ENCODE measurements at regions of chr9 and their contacts with region 1.

Region 1: DNA sequence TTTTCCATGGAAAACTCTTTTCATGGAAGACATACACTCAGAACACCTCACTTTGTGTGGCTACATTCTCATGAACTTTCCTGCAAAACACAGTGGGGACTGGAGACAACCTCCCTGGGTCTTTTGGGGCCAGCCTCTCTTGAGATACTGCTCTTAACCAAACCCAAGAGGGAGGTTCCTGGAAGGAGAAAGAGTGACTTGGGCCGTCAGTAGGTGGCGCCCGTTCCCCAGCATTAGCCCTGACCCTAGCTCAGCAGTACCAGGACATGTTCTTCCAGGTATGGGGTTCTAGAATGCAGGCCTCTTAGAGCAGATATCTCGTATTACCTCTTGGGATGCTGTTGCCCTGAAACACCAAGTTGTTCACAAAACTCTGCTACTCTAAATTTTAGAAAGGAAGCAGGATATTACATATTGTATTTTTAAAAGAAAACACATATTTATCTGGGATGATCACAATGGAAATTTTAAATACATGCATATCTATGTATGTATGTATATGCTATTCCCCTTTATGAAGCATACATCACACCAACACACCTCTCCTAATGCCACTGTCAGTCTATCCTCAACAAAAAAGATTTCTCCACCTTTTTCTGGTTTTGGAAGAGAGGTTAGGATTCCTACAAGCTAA is 15.8 kb upstream of the GLIS3 start:
- DNase-seq: peak; percentile 60 to 84 (median 73)
- ATAC-seq: peak; percentile 74 to 93 (median 88)
- H3K4me3 ChIP-seq: no peak overlapping the region
- H3K27ac ChIP-seq: no peak overlapping the region
- H3K4me1 ChIP-seq: peaks cover 0 to 11% (median 0%) of the 10 kb centered on the region in 12 donors
- H3K27me3 ChIP-seq: no peaks in the 10 kb centered on the region
- CTCF ChIP-seq: peak; percentile 78 to 92 (median 82)
- POLR2A ChIP-seq: no peak

Region 2: DNA sequence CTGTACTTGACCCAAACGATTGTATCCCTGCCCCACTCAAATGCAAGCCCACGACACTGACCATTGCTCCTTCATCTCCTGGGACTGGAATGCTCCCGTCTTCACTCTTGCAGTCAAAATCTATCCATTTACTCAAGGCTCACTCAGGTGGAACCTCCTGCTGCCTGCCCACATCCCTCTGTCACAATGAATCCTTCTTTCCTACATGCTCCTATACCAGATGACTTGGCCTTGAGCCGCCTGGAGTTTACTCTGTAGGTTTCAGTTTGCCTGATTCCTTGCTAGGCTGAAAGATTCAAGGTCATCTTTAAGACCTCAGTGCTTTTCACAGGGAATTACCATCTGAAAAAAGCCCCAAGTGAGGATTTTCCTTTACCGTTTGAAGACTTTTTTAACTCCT is 279.9 kb before region 1 on chr9:
- intact Hi-C with region 1: no loop called
- DNase-seq: no peak
- ATAC-seq: no peak
- H3K4me3 ChIP-seq: no peak overlapping the region
- H3K27ac ChIP-seq: no peak overlapping the region
- H3K4me1 ChIP-seq: peaks cover 0 to 3% (median 0%) of the 10 kb centered on the region in 12 donors
- H3K27me3 ChIP-seq: no peaks in the 10 kb centered on the region
- CTCF ChIP-seq: no peak
- POLR2A ChIP-seq: no peak

Region 3: GRCh38 chr9:4339357-4339756 is 23.7 kb after region 1 on chr9:
- intact Hi-C with region 1: loop called in 3 of 10 experiments (anchors 1 to 2 kb)
- DNase-seq: peak; percentile 68 to 87 (median 78)
- ATAC-seq: peak in 3 of 4 donors; percentile 55 to 71 (median 58)
- H3K4me3 ChIP-seq: no peak overlapping the region
- H3K27ac ChIP-seq: no peak overlapping the region
- H3K4me1 ChIP-seq: peaks cover 0 to 8% (median 3%) of the 10 kb centered on the region in 12 donors
- H3K27me3 ChIP-seq: no peaks in the 10 kb centered on the region
- CTCF ChIP-seq: peak; percentile 87 to 98 (median 92)
- POLR2A ChIP-seq: no peak

Region 4: DNA sequence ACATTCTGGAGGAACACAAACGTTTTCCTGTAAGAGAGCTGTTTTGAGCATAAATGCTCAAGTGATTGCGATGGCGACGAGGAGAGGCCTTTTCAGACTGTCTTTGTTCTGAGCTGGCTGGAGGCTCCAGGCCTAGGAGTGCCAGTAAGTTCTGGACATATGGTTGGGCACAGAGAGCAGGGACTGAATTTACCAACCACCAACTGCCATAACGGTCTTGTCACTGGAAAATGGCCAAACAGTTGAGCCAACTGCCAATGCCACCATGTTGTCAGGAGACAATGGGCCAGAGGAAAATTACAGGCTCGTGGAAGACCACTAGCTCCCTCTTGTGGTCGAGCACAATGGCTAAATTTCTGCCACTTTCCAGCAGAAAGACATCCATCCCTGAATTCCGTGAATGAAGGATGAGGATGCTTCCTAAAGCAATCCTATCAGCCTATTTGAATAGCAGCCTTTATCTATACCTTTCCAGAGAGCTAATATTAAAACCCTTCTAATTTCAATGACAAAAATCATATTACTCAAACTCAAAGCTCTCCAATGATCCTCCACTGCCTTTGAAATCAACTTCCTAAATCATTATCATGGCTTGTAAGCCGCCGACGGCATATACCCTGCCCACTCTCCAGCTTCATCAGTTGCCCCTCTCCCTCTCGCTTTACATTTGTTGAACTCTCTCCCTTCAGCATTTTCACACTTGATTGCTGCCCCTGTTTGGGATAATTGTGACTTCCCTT is 51.1 kb after region 1 on chr9:
- intact Hi-C with region 1: loop called in 6 of 10 experiments (anchors 5 to 10 kb)
- DNase-seq: peak in 1 of 5 donors; percentile 7
- ATAC-seq: peak in 1 of 4 donors; percentile 9
- H3K4me3 ChIP-seq: no peak overlapping the region
- H3K27ac ChIP-seq: no peak overlapping the region
- H3K4me1 ChIP-seq: no peaks in the 10 kb centered on the region
- H3K27me3 ChIP-seq: no peaks in the 10 kb centered on the region
- CTCF ChIP-seq: peak; percentile 37 to 63 (median 54)
- POLR2A ChIP-seq: no peak

Region 5: GRCh38 chr9:4375424-4376200 is 59.9 kb after region 1 on chr9:
- intact Hi-C with region 1: loop called in 3 of 10 experiments (anchors 1 to 5 kb)
- DNase-seq: no peak
- ATAC-seq: peak in 3 of 4 donors; percentile 39 to 64 (median 41)
- H3K4me3 ChIP-seq: no peak overlapping the region
- H3K27ac ChIP-seq: no peak overlapping the region
- H3K4me1 ChIP-seq: no peaks in the 10 kb centered on the region
- H3K27me3 ChIP-seq: peaks cover 0 to 22% (median 0%) of the 10 kb centered on the region in 9 donors
- CTCF ChIP-seq: peak; percentile 19 to 66 (median 40)
- POLR2A ChIP-seq: no peak

Region 6: DNA sequence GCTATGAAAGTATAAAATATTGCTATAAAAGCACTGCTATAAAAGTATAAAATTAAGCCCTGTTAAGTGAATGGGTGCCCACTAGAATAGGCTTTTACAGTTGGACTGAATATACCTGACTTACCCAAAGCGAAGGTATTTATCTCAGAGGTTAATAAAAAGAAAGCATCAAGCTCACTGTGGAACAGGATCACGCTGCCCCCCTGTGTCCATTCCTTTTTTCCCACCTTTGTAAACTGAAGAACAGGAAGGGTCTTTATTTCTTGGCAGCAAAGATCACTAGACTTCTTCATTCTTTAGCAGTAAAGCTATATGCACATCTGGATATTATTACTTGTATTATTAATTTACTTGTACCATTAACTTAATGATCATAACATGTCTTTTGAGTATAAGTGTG is 324.3 kb after region 1 on chr9:
- intact Hi-C with region 1: loop called in 2 of 10 experiments (anchors 5 kb)
- DNase-seq: no peak
- ATAC-seq: no peak
- H3K4me3 ChIP-seq: no peak overlapping the region
- H3K27ac ChIP-seq: no peak overlapping the region
- H3K4me1 ChIP-seq: no peaks in the 10 kb centered on the region
- H3K27me3 ChIP-seq: no peaks in the 10 kb centered on the region
- CTCF ChIP-seq: peak; percentile 33 to 61 (median 49)
- POLR2A ChIP-seq: no peak

Region 7: DNA sequence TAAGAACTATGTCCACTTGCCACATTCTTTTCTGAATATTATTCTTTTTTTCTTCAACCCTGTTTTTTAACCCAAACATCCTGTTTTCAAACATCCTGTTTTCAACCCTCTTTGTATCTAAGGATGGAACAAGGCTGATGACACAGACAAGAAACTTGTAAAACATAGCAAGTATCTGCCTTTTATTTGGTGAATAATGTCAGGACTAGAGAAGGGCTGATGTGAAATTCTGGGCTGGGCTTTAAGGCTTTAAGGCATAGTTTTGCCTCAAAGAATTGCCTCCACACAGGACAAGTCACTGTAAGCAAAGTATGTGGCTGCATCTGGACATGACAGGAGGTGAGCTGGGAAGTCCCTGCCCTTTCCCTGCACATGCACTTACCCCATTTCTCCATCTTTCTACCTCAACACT is 1270.7 kb after region 1 on chr9:
- intact Hi-C with region 1: no loop called
- DNase-seq: no peak
- ATAC-seq: no peak
- H3K4me3 ChIP-seq: no peak overlapping the region
- H3K27ac ChIP-seq: no peak overlapping the region
- H3K4me1 ChIP-seq: peaks cover 0 to 23% (median 9%) of the 10 kb centered on the region in 12 donors
- H3K27me3 ChIP-seq: no peaks in the 10 kb centered on the region
- CTCF ChIP-seq: no peak
- POLR2A ChIP-seq: no peak

Measured in heart left ventricle (tissue), 16 donors.